Endothelial cell of umbilical vein (primary cell): ENCODE measurements at regions of chr3 and their contacts with region 1.

Region 1: DNA sequence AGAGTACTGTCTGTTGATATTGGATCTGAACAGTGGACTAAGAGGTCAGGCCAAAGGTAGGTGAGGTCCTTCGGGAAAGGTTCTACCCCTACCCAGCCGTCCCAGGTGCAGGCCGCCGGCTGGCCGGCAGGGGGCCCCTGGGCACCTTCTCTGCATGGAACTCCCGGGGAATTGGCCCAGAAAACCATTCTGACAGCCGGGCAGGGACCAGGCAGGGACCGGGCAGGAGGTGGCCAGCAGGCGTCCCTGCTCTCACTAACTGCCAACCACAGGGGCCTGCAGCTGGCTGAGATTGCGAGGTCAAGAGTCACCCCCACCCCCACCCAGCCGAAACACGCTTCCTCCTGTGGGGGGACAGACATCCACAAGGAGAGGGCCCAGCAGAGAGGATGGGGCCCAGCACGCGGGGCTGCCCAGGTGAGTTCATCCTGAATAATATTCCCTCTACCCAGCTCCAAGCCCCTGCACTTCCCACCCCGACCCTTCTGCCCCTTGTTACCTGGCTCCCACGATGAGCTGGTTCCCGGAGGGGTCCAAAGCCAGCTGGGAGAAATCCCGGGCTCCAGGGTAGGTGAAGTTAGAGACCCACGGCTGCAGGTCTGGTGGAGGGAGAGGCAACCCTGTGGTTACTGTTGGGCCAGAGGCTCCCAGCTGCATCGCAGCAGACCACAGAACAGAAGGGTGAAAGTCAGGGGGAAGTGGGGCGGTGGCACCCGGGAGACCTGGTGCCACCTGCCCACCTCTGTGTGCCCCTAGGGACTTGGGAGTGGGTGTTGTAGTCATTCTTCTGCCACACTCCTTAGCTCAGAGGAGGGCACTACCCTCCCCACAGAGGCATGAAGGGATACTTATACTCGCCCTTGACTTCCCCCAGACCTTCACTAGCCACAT is 84.4 kb downstream of the SEMA5B start:
- DNase-seq: peak; percentile 17
- H3K4me3 ChIP-seq: no peak overlapping the region
- H3K27ac ChIP-seq: no peak overlapping the region
- H3K4me1 ChIP-seq: peaks cover 11% of the 10 kb centered on the region
- H3K27me3 ChIP-seq: peaks cover 2 to 4% of the 10 kb centered on the region in 2 experiments
- CTCF ChIP-seq: peak; percentile 85 to 91
- POLR2A ChIP-seq: no peak

Region 2: GRCh38 chr3:122754929-122755328 is 188.3 kb before region 1 on chr3:
- CTCF ChIA-PET with region 1: interaction called, 15 read pairs
- POLR2A ChIA-PET with region 1: no interaction called
- dilution Hi-C with region 1: no loop called
- intact Hi-C with region 1: loop called (anchors 2 kb)
- DNase-seq: peak; percentile 36
- H3K4me3 ChIP-seq: no peak overlapping the region
- H3K27ac ChIP-seq: no peak overlapping the region
- H3K4me1 ChIP-seq: no peaks in the 10 kb centered on the region
- H3K27me3 ChIP-seq: no peaks in the 10 kb centered on the region
- CTCF ChIP-seq: peak; percentile 56 to 68
- POLR2A ChIP-seq: no peak

Region 3: GRCh38 chr3:122972141-122972540 is 29.0 kb after region 1 on chr3:
- CTCF ChIA-PET with region 1: no interaction called
- POLR2A ChIA-PET with region 1: no interaction called
- dilution Hi-C with region 1: no loop called
- intact Hi-C with region 1: no loop called
- DNase-seq: no peak
- H3K4me3 ChIP-seq: no peak overlapping the region
- H3K27ac ChIP-seq: no peak overlapping the region
- H3K4me1 ChIP-seq: no peaks in the 10 kb centered on the region
- H3K27me3 ChIP-seq: peaks cover 0 to 7% of the 10 kb centered on the region in 2 experiments
- CTCF ChIP-seq: no peak
- POLR2A ChIP-seq: no peak

Region 4: DNA sequence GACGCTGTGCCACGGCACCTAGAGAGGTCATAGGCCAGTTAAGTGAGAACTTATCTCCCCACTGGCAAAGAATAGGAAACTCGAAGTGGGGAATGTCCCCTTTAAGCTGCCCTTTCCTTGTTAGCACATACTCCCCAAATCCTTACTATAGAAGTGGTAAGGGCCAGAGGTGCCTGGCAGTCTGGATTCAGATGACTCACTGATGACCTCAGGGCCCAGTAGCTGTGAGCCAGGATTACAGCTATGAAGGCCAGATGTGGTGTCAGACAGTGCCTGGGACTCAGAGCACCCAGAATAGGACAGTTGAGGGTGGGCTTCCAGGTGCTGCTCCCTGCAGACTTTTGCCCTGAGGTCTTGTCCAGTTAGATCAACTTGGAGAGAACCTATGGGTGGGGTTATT is 161.4 kb after region 1 on chr3:
- CTCF ChIA-PET with region 1: no interaction called
- POLR2A ChIA-PET with region 1: no interaction called
- dilution Hi-C with region 1: no loop called
- intact Hi-C with region 1: loop called (anchors 10 kb)
- DNase-seq: peak; percentile 28
- H3K4me3 ChIP-seq: no peak overlapping the region
- H3K27ac ChIP-seq: peak overlapping the region; percentile 22
- H3K4me1 ChIP-seq: no peaks in the 10 kb centered on the region
- H3K27me3 ChIP-seq: no peaks in the 10 kb centered on the region
- CTCF ChIP-seq: no peak
- POLR2A ChIP-seq: no peak

Region 5: DNA sequence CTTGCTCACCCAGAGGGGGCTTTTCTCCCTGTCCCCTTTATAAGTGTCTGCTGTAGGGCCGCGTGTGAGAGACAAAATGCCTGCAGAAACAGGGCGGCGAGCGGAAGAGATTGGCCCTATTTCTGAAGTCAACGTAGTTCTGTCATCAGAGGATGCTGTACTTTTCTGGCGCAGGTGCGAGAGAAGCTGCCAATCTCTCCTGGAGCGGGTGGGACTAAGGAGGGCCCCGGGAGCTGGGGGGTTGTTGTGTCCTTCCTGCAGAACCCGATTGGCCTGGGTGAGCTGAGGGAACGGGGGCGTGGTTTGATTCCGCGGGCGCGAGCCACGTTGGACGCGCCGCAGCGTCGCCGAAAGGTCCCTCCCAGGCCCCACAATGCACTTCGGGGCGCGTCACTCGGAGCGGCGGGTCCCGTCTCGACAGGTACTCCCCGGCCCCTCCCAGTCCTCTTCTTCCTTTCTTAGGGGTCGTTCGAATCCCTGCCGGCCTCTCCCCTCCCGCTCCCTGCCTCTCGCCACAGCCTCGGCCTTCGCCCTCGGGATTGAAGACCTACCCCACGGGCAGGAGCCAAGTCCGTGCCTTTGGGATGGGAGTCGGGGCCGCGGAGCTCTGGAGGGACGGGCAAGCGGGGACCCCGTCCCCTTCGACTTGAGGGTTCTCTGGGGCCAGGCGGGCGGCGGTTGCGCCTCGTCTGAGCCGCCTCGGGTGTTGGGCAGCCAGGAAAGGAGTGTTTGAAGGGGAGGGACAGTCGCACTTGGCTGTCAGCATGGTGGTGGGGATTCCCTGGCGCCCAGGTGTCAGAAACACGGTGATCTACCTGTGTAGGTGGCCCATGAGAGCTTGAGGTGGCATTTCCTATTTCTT is 258.6 kb after region 1 on chr3 and contains the start of gene SEC22A:
- CTCF ChIA-PET with region 1: no interaction called
- POLR2A ChIA-PET with region 1: no interaction called
- dilution Hi-C with region 1: no loop called
- intact Hi-C with region 1: loop called (anchors 2 kb)
- DNase-seq: peak; percentile 95
- H3K4me3 ChIP-seq: peak within 1 kb of the TSS; percentile 67 to 93 (median 80)
- H3K27ac ChIP-seq: peak within 1 kb of the TSS; percentile 52
- H3K4me1 ChIP-seq: peaks cover 11% of the 10 kb centered on the region
- H3K27me3 ChIP-seq: no peaks in the 10 kb centered on the region
- CTCF ChIP-seq: no peak
- POLR2A ChIP-seq: peak; percentile 79
- total RNA-seq, gene SEC22A: 20.1 and 20.9 TPM in 2 replicates

Region 6: GRCh38 chr3:124078953-124079911 is 1136.0 kb after region 1 on chr3:
- CTCF ChIA-PET with region 1: no interaction called
- POLR2A ChIA-PET with region 1: no interaction called
- dilution Hi-C with region 1: no loop called
- intact Hi-C with region 1: no loop called
- DNase-seq: peak; percentile 34
- H3K4me3 ChIP-seq: no peak overlapping the region
- H3K27ac ChIP-seq: no peak overlapping the region
- H3K4me1 ChIP-seq: no peaks in the 10 kb centered on the region
- H3K27me3 ChIP-seq: peaks cover 0 to 4% of the 10 kb centered on the region in 2 experiments
- CTCF ChIP-seq: peak; percentile 29 to 58
- POLR2A ChIP-seq: no peak